ENCODE measurements at regions of chr2 and their contacts with region 1.

Region 1: GRCh38 chr2:174717273-174717672 is 47.0 kb downstream of the CHRNA1 start:
- DNase-seq: peak in 4 of 5 donors; percentile 51 to 67 (median 59)
- H3K4me3 ChIP-seq: peak overlapping the region in 1 of 2 donors; percentile 16
- H3K4me3 Mint-ChIP-seq: peak overlapping the region; percentile 62 to 94 (median 78)
- H3K27ac ChIP-seq: no peak overlapping the region
- H3K27ac Mint-ChIP-seq: peak overlapping the region; percentile 15 to 92 (median 80)
- H3K4me1 ChIP-seq: peaks cover 31% of the 10 kb centered on the region
- H3K4me1 Mint-ChIP-seq: peaks cover 26 to 35% (median 30%) of the 10 kb centered on the region in 4 donors
- H3K27me3 ChIP-seq: no peaks in the 10 kb centered on the region
- H3K27me3 Mint-ChIP-seq: no peaks in the 10 kb centered on the region

Region 2: GRCh38 chr2:174585146-174585954 is 131.9 kb before region 1 on chr2:
- CTCF ChIA-PET with region 1: no interaction called
- POLR2A ChIA-PET with region 1: no interaction called
- intact Hi-C with region 1: no loop called
- DNase-seq: no peak
- H3K4me3 ChIP-seq: no peak overlapping the region
- H3K4me3 Mint-ChIP-seq: peak overlapping the region in 7 of 8 donors; percentile 7 to 85 (median 62)
- H3K27ac ChIP-seq: peak overlapping the region; percentile 35
- H3K27ac Mint-ChIP-seq: peak overlapping the region; percentile 78 to 94 (median 85)
- H3K4me1 ChIP-seq: peaks cover 97% of the 10 kb centered on the region
- H3K4me1 Mint-ChIP-seq: peaks cover 73 to 97% (median 84%) of the 10 kb centered on the region in 4 donors
- H3K27me3 ChIP-seq: no peaks in the 10 kb centered on the region
- H3K27me3 Mint-ChIP-seq: no peaks in the 10 kb centered on the region

Region 3: DNA sequence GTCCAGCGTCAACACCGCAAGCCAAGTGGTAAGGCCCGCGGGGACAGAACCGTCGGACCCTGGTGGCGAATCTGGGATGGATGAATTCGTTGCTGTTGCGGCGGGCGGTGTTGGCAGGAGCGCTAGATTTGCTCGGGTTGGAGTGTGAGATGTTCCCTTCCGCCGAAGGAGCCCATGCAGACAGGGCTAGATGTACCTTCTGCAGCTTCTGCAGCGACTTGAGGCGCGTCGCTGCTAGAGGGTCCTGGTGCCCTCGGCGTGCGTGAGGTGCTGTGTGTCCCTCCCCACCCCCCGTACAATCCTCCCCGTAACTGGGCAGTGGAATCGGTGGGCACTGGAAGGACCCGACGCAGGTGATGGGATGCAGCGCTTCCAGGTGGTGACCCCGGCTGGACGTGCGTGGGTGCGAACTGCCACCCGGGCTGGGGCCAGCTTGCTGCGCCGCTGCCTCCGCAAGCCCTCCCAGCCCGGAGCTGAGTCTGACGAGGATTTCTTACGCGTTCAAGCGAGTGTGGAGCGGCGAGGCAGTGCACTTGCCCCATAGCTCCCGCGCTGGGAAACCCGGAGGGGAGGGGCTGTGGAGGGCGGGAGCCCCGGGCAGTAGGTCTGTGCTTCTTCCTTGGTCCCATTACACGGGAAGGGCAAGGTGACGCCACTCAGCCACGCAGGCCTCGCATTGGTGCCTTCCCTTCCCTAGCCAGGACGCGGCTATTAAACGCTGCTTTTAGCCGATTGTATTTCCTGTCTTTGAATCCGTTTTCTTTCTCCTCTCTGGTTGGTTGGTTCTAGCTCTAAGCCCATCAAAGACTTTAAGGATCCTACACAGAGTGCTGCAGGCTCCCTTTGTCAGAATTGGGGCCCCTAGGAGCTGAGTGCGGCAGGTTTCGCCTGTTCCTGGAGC is 12.8 kb after region 1 on chr2:
- CTCF ChIA-PET with region 1: interaction called, 3 read pairs
- POLR2A ChIA-PET with region 1: interaction called, 16 read pairs
- intact Hi-C with region 1: loop called (anchors 2 kb)
- DNase-seq: peak; percentile 32 to 62 (median 40)
- H3K4me3 ChIP-seq: peak overlapping the region; percentile 17 to 76
- H3K4me3 Mint-ChIP-seq: peak overlapping the region; percentile 86 to 93 (median 90)
- H3K27ac ChIP-seq: no peak overlapping the region
- H3K27ac Mint-ChIP-seq: peak overlapping the region in 6 of 7 donors; percentile 50 to 83 (median 73)
- H3K4me1 ChIP-seq: peaks cover 17% of the 10 kb centered on the region
- H3K4me1 Mint-ChIP-seq: peaks cover 3 to 28% (median 10%) of the 10 kb centered on the region in 4 donors
- H3K27me3 ChIP-seq: no peaks in the 10 kb centered on the region
- H3K27me3 Mint-ChIP-seq: peaks cover 0 to 3% of the 10 kb centered on the region in 2 donors